ENCODE measurements at regions of chr1 and their contacts with region 1.

Region 1: DNA sequence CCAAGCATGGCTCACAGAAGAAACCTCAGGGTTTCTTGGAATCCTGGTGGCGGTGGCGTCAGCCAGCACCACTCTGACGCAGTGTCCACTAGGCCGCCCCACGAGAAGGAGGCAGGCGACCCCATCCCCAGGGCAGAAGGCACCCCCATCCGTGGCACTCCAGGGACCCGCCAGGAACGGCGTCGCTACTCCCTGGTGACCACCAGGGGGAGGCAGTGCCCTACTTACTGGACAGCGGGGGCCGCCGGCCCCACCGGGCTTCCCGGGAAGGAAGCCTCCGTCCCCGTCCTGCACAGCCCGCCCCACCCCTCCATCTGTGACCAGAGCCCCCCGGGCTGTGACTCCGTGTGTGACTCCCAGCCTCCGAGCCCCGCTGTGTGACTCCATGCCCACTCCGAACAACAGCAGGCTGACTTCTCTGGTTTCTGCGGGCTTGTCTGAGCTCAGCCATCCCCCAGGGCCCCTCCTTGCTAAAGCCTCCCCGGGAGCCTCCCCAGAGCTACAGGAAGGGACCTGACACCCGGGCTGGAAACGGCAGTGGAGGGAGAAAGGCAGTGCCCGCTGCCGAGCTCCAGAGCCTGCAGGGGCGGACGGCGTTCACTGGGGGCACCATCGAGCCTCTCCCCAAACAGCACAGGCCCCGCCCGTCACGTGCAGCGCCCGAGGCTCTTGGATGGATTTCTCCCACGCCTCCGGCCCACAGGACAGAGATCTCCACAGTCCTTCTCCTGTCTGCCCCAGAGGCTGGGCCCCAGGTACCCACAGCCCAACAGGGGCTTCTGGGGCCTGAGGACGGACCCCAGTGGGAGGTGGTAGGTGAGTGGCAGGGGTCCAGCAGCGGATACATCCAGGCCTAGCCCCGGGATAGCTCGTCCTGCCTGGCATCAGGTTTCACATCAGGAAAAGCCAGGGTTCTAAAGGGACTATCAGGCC is 21.1 kb downstream of the KIF17 start:
- DNase-seq: peak; percentile 83
- H3K4me3 Mint-ChIP-seq: peak overlapping the region; percentile 77
- H3K27ac Mint-ChIP-seq: no peak overlapping the region
- H3K4me1 Mint-ChIP-seq: peaks cover 11% of the 10 kb centered on the region
- H3K27me3 Mint-ChIP-seq: peaks cover 29% of the 10 kb centered on the region
- CTCF ChIP-seq: peak; percentile 72

Region 2: GRCh38 chr1:20640183-20640597 is 56.5 kb before region 1 on chr1:
- CTCF ChIA-PET with region 1: no interaction called
- intact Hi-C with region 1: no loop called
- DNase-seq: peak; percentile 49
- H3K4me3 Mint-ChIP-seq: no peak overlapping the region
- H3K27ac Mint-ChIP-seq: no peak overlapping the region
- H3K4me1 Mint-ChIP-seq: no peaks in the 10 kb centered on the region
- H3K27me3 Mint-ChIP-seq: no peaks in the 10 kb centered on the region
- CTCF ChIP-seq: peak; percentile 74

Region 3: DNA sequence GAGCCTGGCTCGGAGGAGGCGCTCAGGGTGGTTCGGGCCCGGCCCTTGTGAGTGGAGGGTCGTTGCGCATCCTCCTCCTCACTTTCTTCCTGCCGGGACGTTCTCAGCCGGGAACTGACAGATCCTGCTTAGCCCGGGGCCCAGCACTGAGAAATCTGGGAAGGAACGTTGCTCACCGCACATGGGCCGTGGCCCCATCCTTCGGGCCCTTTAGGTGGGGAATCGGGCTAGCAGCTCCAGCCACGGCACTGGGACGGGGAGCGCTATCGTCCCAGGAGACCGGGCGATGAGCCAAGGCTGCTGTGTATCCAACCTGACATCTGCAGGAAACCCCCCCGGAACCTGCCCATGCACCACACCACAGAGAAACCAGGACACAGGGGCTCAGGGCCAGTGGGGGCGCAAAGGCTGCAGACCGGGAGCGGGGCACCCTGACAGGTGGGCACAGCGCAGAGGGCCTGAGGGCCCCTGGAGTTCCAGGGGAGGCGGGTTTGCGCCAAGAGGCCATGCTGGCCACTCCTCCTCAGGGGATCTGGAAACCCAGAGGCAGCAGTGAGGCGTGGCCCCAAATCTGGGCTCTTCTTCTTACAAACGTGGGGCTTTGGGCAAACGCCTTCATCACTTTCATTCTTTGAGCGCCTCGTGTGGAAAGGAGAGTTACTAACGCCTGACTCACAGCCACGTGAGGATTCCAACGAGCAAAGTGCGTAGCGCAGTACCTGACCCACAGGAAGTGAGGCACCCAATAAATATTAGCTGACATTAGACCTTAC is 36.1 kb after region 1 on chr1 and contains the start of gene SH2D5:
- CTCF ChIA-PET with region 1: interaction called, 11 read pairs
- intact Hi-C with region 1: loop called (anchors 5 kb)
- DNase-seq: peak; percentile 71
- H3K4me3 Mint-ChIP-seq: peak within 1 kb of the TSS; percentile 88
- H3K27ac Mint-ChIP-seq: peak within 1 kb of the TSS; percentile 81
- H3K4me1 Mint-ChIP-seq: peaks cover 6% of the 10 kb centered on the region
- H3K27me3 Mint-ChIP-seq: peaks cover 27% of the 10 kb centered on the region
- CTCF ChIP-seq: no peak
- total RNA-seq, gene SH2D5: 2.7 and 3.8 TPM in 2 replicates

Region 4: GRCh38 chr1:20896871-20897223 is 200.2 kb after region 1 on chr1:
- CTCF ChIA-PET with region 1: no interaction called
- intact Hi-C with region 1: no loop called
- DNase-seq: no peak
- H3K4me3 Mint-ChIP-seq: no peak overlapping the region
- H3K27ac Mint-ChIP-seq: no peak overlapping the region
- H3K4me1 Mint-ChIP-seq: no peaks in the 10 kb centered on the region
- H3K27me3 Mint-ChIP-seq: no peaks in the 10 kb centered on the region
- CTCF ChIP-seq: no peak

Region 5: GRCh38 chr1:21200767-21201166 is 504.1 kb after region 1 on chr1:
- CTCF ChIA-PET with region 1: interaction called, 22 read pairs
- intact Hi-C with region 1: loop called (anchors 2 kb)
- DNase-seq: no peak
- H3K4me3 Mint-ChIP-seq: no peak overlapping the region
- H3K27ac Mint-ChIP-seq: no peak overlapping the region
- H3K4me1 Mint-ChIP-seq: no peaks in the 10 kb centered on the region
- H3K27me3 Mint-ChIP-seq: peaks cover 14% of the 10 kb centered on the region
- CTCF ChIP-seq: no peak

Measured in Calu3 (cell line).